ENCODE measurements at regions of chr1 and their contacts with region 1.

Region 1: GRCh38 chr1:52127181-52128180 is 14.4 kb upstream of the ZFYVE9 start:
- DNase-seq: peak; percentile 59
- H3K4me3 Mint-ChIP-seq: no peak overlapping the region
- H3K27ac Mint-ChIP-seq: no peak overlapping the region
- H3K4me1 Mint-ChIP-seq: peaks cover 3% of the 10 kb centered on the region
- H3K27me3 Mint-ChIP-seq: peaks cover 44% of the 10 kb centered on the region

Region 2: DNA sequence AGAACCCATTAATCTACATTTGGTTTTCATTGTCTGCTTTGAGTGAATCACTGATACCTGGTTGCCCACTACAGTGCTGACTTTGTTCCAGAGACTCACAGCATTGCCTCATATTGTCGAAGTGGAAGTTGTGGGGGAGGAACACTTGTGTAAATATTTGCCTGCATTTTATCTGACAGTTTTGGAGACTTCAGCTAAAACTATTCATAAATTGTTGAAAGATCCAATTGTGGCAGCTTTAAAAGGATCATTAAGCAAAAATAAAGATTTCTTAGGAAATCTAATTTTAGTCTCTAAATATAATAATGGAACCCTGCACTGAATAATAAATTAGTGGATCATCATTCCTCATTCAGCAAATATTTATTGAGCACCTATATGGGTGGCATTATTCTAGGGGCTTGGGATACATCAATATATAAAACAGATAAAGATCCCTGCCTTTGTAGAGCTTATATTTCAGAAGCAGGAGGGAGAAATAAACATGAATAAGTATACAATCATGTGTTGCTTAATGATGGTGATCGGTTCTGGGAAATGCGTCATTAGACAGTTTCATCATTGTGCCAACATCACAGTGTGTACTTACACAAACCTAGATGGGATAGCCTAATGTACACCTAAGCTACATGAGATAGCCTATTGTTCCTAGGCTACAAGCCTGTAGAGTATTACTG is 437.1 kb before region 1 on chr1:
- intact Hi-C with region 1: no loop called
- DNase-seq: no peak
- H3K4me3 Mint-ChIP-seq: no peak overlapping the region
- H3K27ac Mint-ChIP-seq: no peak overlapping the region
- H3K4me1 Mint-ChIP-seq: peaks cover 5% of the 10 kb centered on the region
- H3K27me3 Mint-ChIP-seq: no peaks in the 10 kb centered on the region

Region 3: GRCh38 chr1:52159033-52159789 is 31.7 kb after region 1 on chr1:
- intact Hi-C with region 1: no loop called
- DNase-seq: peak; percentile 38
- H3K4me3 Mint-ChIP-seq: no peak overlapping the region
- H3K27ac Mint-ChIP-seq: no peak overlapping the region
- H3K4me1 Mint-ChIP-seq: no peaks in the 10 kb centered on the region
- H3K27me3 Mint-ChIP-seq: peaks cover 2% of the 10 kb centered on the region

Region 4: GRCh38 chr1:52296345-52296744 is 168.9 kb after region 1 on chr1:
- intact Hi-C with region 1: loop called (anchors 2 kb)
- DNase-seq: peak; percentile 60
- H3K4me3 Mint-ChIP-seq: no peak overlapping the region
- H3K27ac Mint-ChIP-seq: no peak overlapping the region
- H3K4me1 Mint-ChIP-seq: no peaks in the 10 kb centered on the region
- H3K27me3 Mint-ChIP-seq: peaks cover 2% of the 10 kb centered on the region